ENCODE measurements at regions of chr17 and their contacts with region 1.

Region 1: GRCh38 chr17:31094600-31095238 is at the start of gene NF1:
- DNase-seq: peak; percentile 96 to 97
- H3K4me3 ChIP-seq: peak within 1 kb of the TSS; percentile 98
- H3K4me3 Mint-ChIP-seq: peak within 1 kb of the TSS; percentile 94
- H3K27ac Mint-ChIP-seq: peak within 1 kb of the TSS; percentile 57
- H3K4me1 ChIP-seq: 0 out of 2 replicates have a peak, but pooled peaks cover 9% of the 10 kb centered on the region
- H3K4me1 Mint-ChIP-seq: peaks cover 10% of the 10 kb centered on the region
- H3K27me3 ChIP-seq: no peaks in the 10 kb centered on the region
- H3K27me3 Mint-ChIP-seq: no peaks in the 10 kb centered on the region
- CTCF ChIP-seq: no peak
- total RNA-seq, gene NF1: 62.4 and 69.5 TPM in 2 replicates

Region 2: GRCh38 chr17:31071886-31072570 is 22.7 kb before region 1 on chr17:
- CTCF ChIA-PET with region 1: no interaction called
- POLR2A ChIA-PET with region 1: interaction called, 5 read pairs
- intact Hi-C with region 1: loop called (anchors 1 kb)
- DNase-seq: peak; percentile 80 to 87
- H3K4me3 ChIP-seq: no peak overlapping the region
- H3K4me3 Mint-ChIP-seq: peak overlapping the region; percentile 27
- H3K27ac Mint-ChIP-seq: peak overlapping the region; percentile 73
- H3K4me1 ChIP-seq: peaks cover 43% of the 10 kb centered on the region
- H3K4me1 Mint-ChIP-seq: peaks cover 20% of the 10 kb centered on the region
- H3K27me3 ChIP-seq: no peaks in the 10 kb centered on the region
- H3K27me3 Mint-ChIP-seq: no peaks in the 10 kb centered on the region
- CTCF ChIP-seq: no peak

Region 3: DNA sequence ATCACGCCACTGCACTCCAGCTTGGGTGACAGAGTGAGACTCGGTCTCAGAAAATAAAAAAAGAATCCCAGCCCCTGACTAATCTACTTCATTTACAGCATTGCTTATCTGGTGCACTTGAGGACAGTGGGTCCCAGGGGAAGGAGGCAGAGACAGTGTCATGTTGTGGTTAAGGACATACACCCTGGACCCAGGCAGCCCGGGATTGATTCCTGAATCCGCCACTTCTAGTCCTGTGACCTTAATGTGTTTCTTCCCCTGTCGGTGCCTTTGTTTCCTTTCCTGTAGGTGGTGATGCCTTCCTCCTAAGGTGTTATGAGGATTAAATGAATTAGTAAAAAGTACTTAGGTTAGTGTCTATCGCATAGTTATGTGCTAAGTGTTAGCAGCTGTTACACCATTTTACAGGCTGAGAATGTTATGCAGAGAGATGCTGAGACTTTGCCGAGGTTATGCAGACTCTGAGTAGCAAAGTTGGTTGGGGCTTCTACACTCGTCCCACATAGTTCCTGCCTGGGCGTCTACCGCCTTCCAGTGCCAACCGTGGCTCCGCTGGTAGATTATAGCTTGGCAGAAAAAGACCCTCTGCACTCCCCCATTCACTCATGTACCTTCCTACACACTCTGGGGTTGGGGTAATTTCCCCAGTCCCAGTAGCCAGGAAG is 371.5 kb after region 1 on chr17:
- CTCF ChIA-PET with region 1: no interaction called
- POLR2A ChIA-PET with region 1: no interaction called
- intact Hi-C with region 1: no loop called
- DNase-seq: no peak
- H3K4me3 ChIP-seq: no peak overlapping the region
- H3K4me3 Mint-ChIP-seq: no peak overlapping the region
- H3K27ac Mint-ChIP-seq: no peak overlapping the region
- H3K4me1 ChIP-seq: peaks cover 4% of the 10 kb centered on the region
- H3K4me1 Mint-ChIP-seq: peaks cover 20% of the 10 kb centered on the region
- H3K27me3 ChIP-seq: no peaks in the 10 kb centered on the region
- H3K27me3 Mint-ChIP-seq: no peaks in the 10 kb centered on the region
- CTCF ChIP-seq: no peak

Measured in Caco-2 (cell line).